Vagina (tissue), 2 donors: ENCODE measurements at regions of chr1 and their contacts with region 1.

Region 1: GRCh38 chr1:91885716-91886506 is at the start of gene TGFBR3:
- DNase-seq: peak in 1 of 2 donors; percentile 93
- H3K4me3 ChIP-seq: peak within 1 kb of the TSS; percentile 84 to 99
- H3K27ac ChIP-seq: peak within 1 kb of the TSS; percentile 97
- H3K4me1 ChIP-seq: peaks cover 42% of the 10 kb centered on the region
- H3K27me3 ChIP-seq: no peaks in the 10 kb centered on the region
- CTCF ChIP-seq: peak in 2 of 3 experiments; percentile 15 to 29
- POLR2A ChIP-seq: peak in 1 of 2 donors; percentile 85
- total RNA-seq, gene TGFBR3: 221 TPM

Region 2: GRCh38 chr1:91689641-91690481 is 196.1 kb before region 1 on chr1:
- intact Hi-C with region 1: loop called (anchors 2 kb)
- DNase-seq: no peak
- H3K4me3 ChIP-seq: no peak overlapping the region
- H3K27ac ChIP-seq: peak overlapping the region; percentile 79
- H3K4me1 ChIP-seq: peaks cover 39% of the 10 kb centered on the region
- H3K27me3 ChIP-seq: no peaks in the 10 kb centered on the region
- CTCF ChIP-seq: no peak
- POLR2A ChIP-seq: no peak

Region 3: GRCh38 chr1:91742848-91743292 is 143.0 kb before region 1 on chr1:
- intact Hi-C with region 1: loop called (anchors 10 kb)
- DNase-seq: peak in 1 of 2 donors; percentile 44
- H3K4me3 ChIP-seq: no peak overlapping the region
- H3K27ac ChIP-seq: peak overlapping the region; percentile 57
- H3K4me1 ChIP-seq: peaks cover 71% of the 10 kb centered on the region
- H3K27me3 ChIP-seq: no peaks in the 10 kb centered on the region
- CTCF ChIP-seq: no peak
- POLR2A ChIP-seq: no peak

Region 4: DNA sequence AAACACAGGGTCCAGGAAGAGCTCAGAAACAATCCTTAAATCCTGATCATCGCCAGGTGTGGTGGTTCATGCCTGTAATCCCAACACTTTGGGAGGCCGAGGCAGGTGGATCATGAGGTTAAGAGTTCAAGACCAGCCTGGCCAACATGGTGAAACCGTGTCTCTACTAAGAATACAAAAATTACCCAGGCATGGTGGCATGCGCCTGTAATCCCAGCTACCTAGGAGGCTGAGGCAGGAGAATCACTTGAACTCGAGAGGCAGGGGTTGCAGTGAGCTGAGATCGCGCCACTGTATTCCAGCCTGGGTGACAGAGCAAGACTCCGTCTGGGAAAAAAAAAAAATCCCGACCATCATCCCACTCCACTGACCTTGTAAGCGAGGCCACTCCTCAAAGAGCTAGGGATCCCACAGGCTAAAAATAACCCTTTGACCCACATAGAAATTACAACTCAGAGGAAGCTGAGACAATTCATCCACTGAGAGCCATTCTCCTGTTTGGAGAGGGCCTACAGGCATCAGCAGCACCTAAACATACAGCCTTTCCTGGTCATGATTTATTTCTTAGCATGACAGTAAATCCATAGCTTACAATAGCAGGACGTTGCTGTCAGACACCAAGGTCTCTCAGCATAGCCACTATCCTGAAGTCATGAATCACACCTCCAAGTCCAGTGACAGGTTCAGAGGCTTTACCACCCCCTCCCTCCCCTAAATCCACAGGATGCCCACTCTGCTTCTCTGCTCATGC is 66.7 kb before region 1 on chr1:
- intact Hi-C with region 1: no loop called
- DNase-seq: no peak
- H3K4me3 ChIP-seq: no peak overlapping the region
- H3K27ac ChIP-seq: peak overlapping the region; percentile 57
- H3K4me1 ChIP-seq: peaks cover 64% of the 10 kb centered on the region
- H3K27me3 ChIP-seq: no peaks in the 10 kb centered on the region
- CTCF ChIP-seq: no peak
- POLR2A ChIP-seq: no peak

Region 5: GRCh38 chr1:91851130-91852010 is 34.5 kb before region 1 on chr1:
- intact Hi-C with region 1: loop called (anchors 5 kb)
- DNase-seq: no peak
- H3K4me3 ChIP-seq: peak overlapping the region; percentile 22 to 27
- H3K27ac ChIP-seq: peak overlapping the region; percentile 75
- H3K4me1 ChIP-seq: peaks cover 58% of the 10 kb centered on the region
- H3K27me3 ChIP-seq: no peaks in the 10 kb centered on the region
- CTCF ChIP-seq: no peak
- POLR2A ChIP-seq: no peak

Region 6: GRCh38 chr1:91924146-91924545 is 38.2 kb after region 1 on chr1:
- intact Hi-C with region 1: no loop called
- DNase-seq: peak in 1 of 2 donors; percentile 71
- H3K4me3 ChIP-seq: no peak overlapping the region
- H3K27ac ChIP-seq: no peak overlapping the region
- H3K4me1 ChIP-seq: peaks cover 5% of the 10 kb centered on the region
- H3K27me3 ChIP-seq: no peaks in the 10 kb centered on the region
- CTCF ChIP-seq: no peak
- POLR2A ChIP-seq: no peak